ENCODE measurements at regions of chr12 and their contacts with region 1.

Region 1: GRCh38 chr12:7108796-7109571 is at the start of gene C1RL:
- DNase-seq: peak; percentile 94
- total RNA-seq, gene C1RL: 10.5 TPM

Region 2: DNA sequence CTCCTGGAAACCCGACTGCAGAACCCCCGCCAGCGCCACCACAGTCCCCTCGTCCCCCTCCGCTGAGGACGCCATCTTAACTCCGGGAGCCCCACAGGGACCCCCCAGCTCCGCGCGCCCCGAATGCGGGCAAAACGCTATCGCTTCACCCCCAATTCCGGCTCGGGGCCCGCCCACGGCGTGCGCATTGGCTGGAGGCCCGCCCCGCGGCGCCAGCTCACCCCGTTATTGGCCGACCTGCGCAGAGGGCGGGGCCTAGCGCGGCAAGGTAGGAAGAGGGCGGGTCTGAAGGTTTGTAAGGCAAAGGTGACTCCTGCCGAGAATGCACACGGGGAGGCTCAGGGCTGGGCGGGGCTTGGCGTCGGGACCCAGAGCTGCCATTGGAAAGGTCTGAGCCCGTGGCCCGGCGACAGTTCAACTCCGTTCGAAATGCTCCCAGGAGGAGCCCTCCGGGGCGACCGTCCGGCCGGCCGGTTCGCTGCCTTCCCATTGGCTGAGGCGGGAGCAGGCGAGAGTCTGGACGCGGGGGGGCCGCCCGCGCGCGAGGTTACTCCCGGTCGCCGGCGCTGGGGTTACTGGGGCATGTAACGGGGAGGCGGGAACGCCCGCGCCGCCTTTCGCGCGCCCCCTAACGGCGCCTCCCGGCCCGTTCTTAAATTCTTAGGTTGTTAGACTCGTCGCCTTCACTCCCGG is 90.5 kb before region 1 on chr12 and contains the start of gene LPCAT3:
- intact Hi-C with region 1: loop called (anchors 5 kb)
- DNase-seq: peak; percentile 98
- total RNA-seq, gene LPCAT3: 19.7 TPM